Heart left ventricle (tissue), 16 donors: ENCODE measurements at regions of chr4 and their contacts with region 1.

Region 1: DNA sequence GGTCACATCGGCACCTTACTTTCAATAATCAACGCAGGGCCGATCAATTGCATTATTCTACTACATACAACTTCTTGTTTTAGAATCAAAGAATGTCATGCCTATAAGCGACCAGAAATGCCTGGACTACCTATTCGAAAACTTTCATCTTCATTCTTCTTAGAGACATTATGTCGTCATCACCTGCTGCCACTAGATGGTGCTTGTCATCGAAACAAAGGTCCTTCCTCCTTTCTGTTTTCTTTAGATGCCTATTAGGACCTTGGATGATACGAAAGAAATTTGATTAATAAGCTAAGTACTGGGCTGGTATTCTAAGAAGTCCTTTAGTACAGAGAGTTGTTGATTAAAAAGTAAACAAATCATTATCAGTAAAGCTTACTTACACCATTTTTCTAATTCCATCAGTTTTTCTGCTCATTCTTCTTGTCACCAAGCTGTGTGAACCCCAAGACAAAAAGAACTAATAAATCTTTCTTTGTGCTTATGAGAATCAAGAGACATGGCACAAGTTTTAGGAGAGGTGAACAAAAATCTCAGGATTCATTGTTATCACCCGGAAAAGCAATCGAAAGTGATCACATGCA is 154.5 kb upstream of the SLC4A4 start:
- DNase-seq: peak in 3 of 5 donors; percentile 12 to 53 (median 41)
- ATAC-seq: no peak
- H3K4me3 ChIP-seq: no peak overlapping the region
- H3K27ac ChIP-seq: no peak overlapping the region
- H3K4me1 ChIP-seq: peaks cover 0 to 18% (median 7%) of the 10 kb centered on the region in 12 donors
- H3K27me3 ChIP-seq: peaks cover 0 to 37% (median 0%) of the 10 kb centered on the region in 9 donors
- CTCF ChIP-seq: peak; percentile 35 to 79 (median 62)
- POLR2A ChIP-seq: no peak

Region 2: DNA sequence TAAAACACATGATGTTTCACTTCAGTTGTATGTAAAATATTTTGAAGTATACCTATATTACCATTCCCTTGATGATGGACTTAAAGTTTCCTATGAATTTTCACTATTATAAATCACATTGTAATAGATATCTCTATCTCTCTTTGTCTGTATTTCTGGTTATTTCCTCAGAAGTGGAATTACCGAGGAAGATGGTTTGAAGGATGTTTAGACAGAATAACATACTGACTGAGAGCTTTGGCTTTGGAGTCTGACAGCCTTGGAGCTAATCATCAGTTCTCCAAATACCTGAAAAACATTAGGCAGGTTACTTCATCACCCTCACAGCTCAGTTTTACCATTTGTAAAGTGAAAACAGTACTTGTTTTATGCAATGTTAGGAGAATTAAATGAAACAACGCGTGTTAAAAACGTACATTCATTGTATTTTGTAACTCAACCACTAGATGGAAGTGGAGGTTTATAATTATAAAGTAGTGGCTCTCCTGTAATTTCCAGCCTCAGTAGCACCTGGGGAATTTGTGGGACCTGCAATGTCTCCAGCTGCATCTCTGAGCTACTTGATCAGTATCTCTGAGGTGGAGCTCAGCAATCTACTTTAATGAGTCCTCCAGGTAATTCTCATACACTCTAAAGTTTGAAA is 532.3 kb before region 1 on chr4:
- intact Hi-C with region 1: loop called in 1 of 10 experiments (anchors 10 kb)
- DNase-seq: no peak
- ATAC-seq: peak in 3 of 4 donors; percentile 26 to 60 (median 34)
- H3K4me3 ChIP-seq: no peak overlapping the region
- H3K27ac ChIP-seq: no peak overlapping the region
- H3K4me1 ChIP-seq: peaks cover 0 to 6% (median 0%) of the 10 kb centered on the region in 12 donors
- H3K27me3 ChIP-seq: peaks cover 0 to 5% (median 0%) of the 10 kb centered on the region in 9 donors
- CTCF ChIP-seq: peak; percentile 37 to 65 (median 56)
- POLR2A ChIP-seq: no peak

Region 3: GRCh38 chr4:71229477-71230270 is 45.4 kb after region 1 on chr4:
- intact Hi-C with region 1: loop called in 5 of 10 experiments (anchors 2 to 5 kb)
- DNase-seq: peak in 3 of 5 donors; percentile 30 to 41 (median 31)
- ATAC-seq: peak in 2 of 4 donors; percentile 61 to 71
- H3K4me3 ChIP-seq: peak overlapping the region in 5 of 12 donors; percentile 0 to 18 (median 8)
- H3K27ac ChIP-seq: peak overlapping the region in 10 of 12 donors; percentile 38 to 85 (median 74)
- H3K4me1 ChIP-seq: peaks cover 0 to 40% (median 13%) of the 10 kb centered on the region in 12 donors
- H3K27me3 ChIP-seq: no peaks in the 10 kb centered on the region
- CTCF ChIP-seq: peak; percentile 44 to 80 (median 68)
- POLR2A ChIP-seq: no peak

Region 4: GRCh38 chr4:71254451-71255012 is 70.2 kb after region 1 on chr4:
- intact Hi-C with region 1: loop called in 2 of 10 experiments (anchors 5 kb)
- DNase-seq: no peak
- ATAC-seq: peak; percentile 41 to 66 (median 56)
- H3K4me3 ChIP-seq: peak overlapping the region in 3 of 12 donors; percentile 13 to 21 (median 20)
- H3K27ac ChIP-seq: peak overlapping the region in 1 of 12 donors; percentile 29
- H3K4me1 ChIP-seq: peaks cover 0 to 62% (median 27%) of the 10 kb centered on the region in 12 donors
- H3K27me3 ChIP-seq: no peaks in the 10 kb centered on the region
- CTCF ChIP-seq: peak in 2 of 12 donors; percentile 15 to 26
- POLR2A ChIP-seq: no peak

Region 5: DNA sequence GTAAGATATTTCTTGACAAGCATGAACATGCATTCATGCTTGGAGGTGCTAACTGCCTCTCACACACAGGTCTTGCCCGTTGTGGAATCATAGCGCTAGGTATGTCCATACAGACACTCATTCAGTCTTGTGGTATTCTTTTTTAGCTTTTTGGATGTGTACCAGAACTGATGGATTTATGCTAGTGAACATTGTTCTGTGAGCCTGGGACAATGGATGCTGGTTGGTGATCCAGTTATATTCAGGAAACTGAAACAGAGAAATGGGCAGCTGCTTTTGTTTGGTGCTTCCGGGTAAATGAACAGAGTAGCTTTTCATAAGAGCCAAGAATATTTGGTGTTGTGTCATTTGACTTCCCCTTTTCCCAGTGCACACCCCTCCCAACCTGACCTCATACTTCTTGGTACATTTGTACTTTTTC is 75.6 kb after region 1 on chr4:
- intact Hi-C with region 1: loop called in 1 of 10 experiments (anchors 5 kb)
- DNase-seq: peak in 1 of 5 donors; percentile 21
- ATAC-seq: peak; percentile 9 to 70 (median 48)
- H3K4me3 ChIP-seq: no peak overlapping the region
- H3K27ac ChIP-seq: peak overlapping the region in 11 of 12 donors; percentile 23 to 90 (median 83)
- H3K4me1 ChIP-seq: peaks cover 0 to 58% (median 32%) of the 10 kb centered on the region in 12 donors
- H3K27me3 ChIP-seq: no peaks in the 10 kb centered on the region
- CTCF ChIP-seq: no peak
- POLR2A ChIP-seq: no peak

Region 6: DNA sequence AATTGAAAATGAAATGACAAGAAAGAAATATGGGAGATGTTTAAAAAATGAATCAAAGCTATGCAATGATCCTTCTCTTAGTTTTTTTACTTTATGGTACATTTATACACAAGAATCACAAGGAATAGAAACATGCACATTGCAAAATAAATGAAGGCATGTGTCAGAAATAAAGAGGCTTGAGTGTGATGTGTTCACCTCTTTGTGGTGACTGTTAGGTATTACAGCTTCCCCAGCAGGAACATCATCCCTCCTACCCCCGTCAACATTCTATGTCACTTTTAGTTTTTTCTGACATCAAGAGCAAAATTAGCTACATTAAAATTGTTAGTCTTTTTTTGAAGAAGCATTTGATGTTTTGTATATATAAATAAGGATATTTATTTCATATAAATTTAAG is 369.3 kb after region 1 on chr4:
- intact Hi-C with region 1: loop called (anchors 1 to 5 kb)
- DNase-seq: no peak
- ATAC-seq: peak in 3 of 4 donors; percentile 70 to 81 (median 74)
- H3K4me3 ChIP-seq: no peak overlapping the region
- H3K27ac ChIP-seq: no peak overlapping the region
- H3K4me1 ChIP-seq: peaks cover 0 to 5% (median 0%) of the 10 kb centered on the region in 12 donors
- H3K27me3 ChIP-seq: no peaks in the 10 kb centered on the region
- CTCF ChIP-seq: peak; percentile 25 to 64 (median 51)
- POLR2A ChIP-seq: no peak

Region 7: GRCh38 chr4:71713611-71714203 is 529.4 kb after region 1 on chr4:
- intact Hi-C with region 1: loop called in 9 of 10 experiments (anchors 2 to 10 kb)
- DNase-seq: peak in 1 of 5 donors; percentile 11
- ATAC-seq: peak in 1 of 4 donors; percentile 45
- H3K4me3 ChIP-seq: no peak overlapping the region
- H3K27ac ChIP-seq: no peak overlapping the region
- H3K4me1 ChIP-seq: no peaks in the 10 kb centered on the region
- H3K27me3 ChIP-seq: no peaks in the 10 kb centered on the region
- CTCF ChIP-seq: peak in 11 of 12 donors; percentile 32 to 68 (median 57)
- POLR2A ChIP-seq: no peak